ENCODE measurements at regions of chr17 and their contacts with region 1.

Region 1: GRCh38 chr17:58631523-58632323 is 60.1 kb downstream of the TEX14 start:
- H3K4me3 ChIP-seq: peak overlapping the region; percentile 19
- H3K27ac ChIP-seq: peak overlapping the region; percentile 86
- H3K4me1 ChIP-seq: no peaks in the 10 kb centered on the region
- CTCF ChIP-seq: peak; percentile 88

Region 2: GRCh38 chr17:58402047-58402446 is 229.7 kb before region 1 on chr17:
- CTCF ChIA-PET with region 1: no interaction called
- POLR2A ChIA-PET with region 1: no interaction called
- H3K4me3 ChIP-seq: no peak overlapping the region
- H3K27ac ChIP-seq: no peak overlapping the region
- H3K4me1 ChIP-seq: peaks cover 41% of the 10 kb centered on the region
- CTCF ChIP-seq: no peak

Region 3: DNA sequence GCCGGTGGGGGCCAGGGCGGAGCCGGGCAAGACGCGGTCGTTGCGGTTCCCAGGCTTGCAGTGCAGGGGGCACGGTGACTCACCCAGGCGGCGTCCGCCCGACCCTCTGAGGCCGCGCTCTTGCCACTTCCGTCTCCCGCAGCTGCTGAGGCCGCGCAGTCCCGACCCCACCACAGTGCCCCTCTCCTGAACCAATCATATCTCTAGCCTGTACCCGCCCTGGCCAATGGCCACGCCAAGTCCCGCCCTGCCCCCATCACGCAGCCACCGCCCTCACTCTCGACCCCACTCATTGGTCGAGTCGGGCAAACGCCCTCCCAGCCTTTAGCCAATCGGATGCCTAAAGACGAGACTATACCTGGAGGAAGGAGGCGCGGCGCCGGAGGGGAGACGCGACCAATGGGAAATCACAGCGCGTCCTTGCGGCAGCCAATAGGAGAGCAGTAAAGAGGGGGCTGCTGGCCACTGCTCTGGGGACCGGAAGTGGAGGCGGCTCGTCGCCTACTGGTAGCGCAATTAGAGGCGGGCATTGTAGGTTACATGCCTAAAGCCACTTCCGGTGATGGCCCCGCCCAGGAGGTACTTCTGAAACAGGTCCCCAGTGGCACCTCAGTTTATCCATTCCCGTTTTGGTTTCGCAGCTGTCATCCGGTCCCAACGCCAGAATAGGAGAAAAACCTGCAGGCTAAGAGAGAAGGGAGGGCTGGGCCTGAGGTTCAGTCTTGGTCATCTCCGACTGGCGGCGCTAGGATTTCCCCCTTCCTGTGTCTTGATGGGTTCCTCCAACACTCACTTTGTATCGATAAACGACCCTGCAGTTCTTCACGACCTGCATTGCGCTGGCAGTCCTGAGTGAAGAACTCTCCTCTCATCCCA is 113.8 kb before region 1 on chr17:
- CTCF ChIA-PET with region 1: interaction called, 13 read pairs
- POLR2A ChIA-PET with region 1: interaction called, 39 read pairs
- H3K4me3 ChIP-seq: peak overlapping the region; percentile 79
- H3K27ac ChIP-seq: peak overlapping the region; percentile 84
- H3K4me1 ChIP-seq: peaks cover 3% of the 10 kb centered on the region; the same call in 1 of the 2 replicates
- CTCF ChIP-seq: no peak

Region 4: DNA sequence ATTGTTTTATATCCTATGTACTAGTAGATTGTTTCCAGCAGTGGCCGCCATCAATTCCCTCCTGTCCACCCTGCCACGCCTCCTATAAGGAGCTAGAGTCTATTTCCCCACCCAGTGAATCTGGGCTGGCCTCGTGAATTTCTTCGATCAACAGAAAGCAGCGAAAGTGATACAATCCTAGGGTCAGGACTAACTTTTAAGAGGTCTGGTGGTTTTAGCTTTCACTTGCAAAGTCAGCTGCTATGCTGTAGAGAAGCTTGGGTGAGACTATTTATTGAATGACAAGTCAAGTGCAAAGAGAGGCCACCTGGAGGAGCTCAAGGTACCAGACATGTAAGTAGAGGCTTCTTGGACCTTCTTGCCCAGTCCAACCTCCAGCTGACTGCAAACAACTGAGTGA is 36.4 kb before region 1 on chr17:
- CTCF ChIA-PET with region 1: interaction called, 4 read pairs
- POLR2A ChIA-PET with region 1: interaction called, 23 read pairs
- H3K4me3 ChIP-seq: no peak overlapping the region
- H3K27ac ChIP-seq: no peak overlapping the region
- H3K4me1 ChIP-seq: no peaks in the 10 kb centered on the region
- CTCF ChIP-seq: no peak

Region 5: DNA sequence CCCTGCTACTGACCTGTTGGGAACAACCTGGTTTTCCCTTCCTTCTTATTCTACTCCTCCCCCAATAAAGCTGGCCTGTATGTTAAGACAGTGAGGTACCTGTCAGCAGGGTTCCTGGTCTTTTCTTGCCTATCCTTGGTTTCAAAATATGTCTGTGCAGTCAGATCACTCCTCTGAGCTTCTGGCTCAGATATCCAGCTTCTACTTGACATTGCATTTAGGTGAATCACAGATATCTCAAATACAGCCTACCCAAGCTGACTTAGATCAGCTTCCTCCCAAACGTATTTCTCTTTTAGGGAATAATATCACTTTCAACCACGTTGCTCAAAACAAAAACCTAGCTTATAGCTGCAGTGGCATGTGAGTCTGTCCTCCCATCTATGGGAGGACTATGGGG is 11.4 kb after region 1 on chr17:
- CTCF ChIA-PET with region 1: interaction called, 4 read pairs
- POLR2A ChIA-PET with region 1: interaction called, 55 read pairs
- H3K4me3 ChIP-seq: no peak overlapping the region
- H3K27ac ChIP-seq: no peak overlapping the region
- H3K4me1 ChIP-seq: no peaks in the 10 kb centered on the region
- CTCF ChIP-seq: no peak

Region 6: DNA sequence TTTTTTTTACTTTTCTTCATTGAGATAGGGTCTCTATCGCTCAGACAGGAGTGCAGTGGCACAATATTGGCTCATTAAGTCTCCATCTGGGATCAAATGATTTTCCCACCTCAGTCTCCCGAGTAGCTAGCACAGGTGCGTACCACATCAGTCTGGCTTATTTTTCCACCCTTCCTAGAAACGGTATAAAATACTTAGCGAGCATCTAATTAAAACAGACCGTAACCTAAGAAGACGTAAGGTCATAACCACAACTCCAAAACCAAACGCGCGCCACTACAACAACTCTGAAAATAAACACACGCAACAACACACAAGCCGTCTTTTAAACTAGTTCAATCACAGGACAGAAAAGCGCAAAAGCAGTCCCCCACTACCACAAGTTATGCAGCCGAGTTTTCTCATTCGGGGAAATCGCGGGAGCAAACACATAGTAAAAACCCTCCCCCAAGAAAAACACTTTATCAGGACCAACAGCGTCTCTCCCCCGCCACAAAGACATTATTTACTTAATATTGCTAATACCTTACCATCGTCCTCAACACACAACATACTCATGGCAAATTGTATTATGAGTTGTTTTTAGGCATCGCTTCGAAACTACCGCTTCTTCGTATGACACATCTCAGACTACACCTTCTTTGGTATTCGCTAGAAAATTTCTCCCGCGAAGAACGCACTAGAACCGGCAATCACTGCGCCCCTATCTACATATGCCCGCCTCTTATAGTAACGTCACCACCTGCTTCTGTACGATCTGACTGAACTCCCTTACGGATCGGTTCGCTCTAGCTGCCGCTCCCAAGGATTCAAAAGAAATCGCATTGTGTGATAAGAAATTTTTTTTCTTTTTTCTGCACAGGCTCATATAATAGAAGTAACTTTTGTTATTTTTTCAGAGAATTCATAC is 27.3 kb after region 1 on chr17:
- CTCF ChIA-PET with region 1: no interaction called
- POLR2A ChIA-PET with region 1: interaction called, 87 read pairs
- H3K4me3 ChIP-seq: peak overlapping the region; percentile 25
- H3K27ac ChIP-seq: peak overlapping the region; percentile 97
- H3K4me1 ChIP-seq: no peaks in the 10 kb centered on the region
- CTCF ChIP-seq: no peak

Region 7: DNA sequence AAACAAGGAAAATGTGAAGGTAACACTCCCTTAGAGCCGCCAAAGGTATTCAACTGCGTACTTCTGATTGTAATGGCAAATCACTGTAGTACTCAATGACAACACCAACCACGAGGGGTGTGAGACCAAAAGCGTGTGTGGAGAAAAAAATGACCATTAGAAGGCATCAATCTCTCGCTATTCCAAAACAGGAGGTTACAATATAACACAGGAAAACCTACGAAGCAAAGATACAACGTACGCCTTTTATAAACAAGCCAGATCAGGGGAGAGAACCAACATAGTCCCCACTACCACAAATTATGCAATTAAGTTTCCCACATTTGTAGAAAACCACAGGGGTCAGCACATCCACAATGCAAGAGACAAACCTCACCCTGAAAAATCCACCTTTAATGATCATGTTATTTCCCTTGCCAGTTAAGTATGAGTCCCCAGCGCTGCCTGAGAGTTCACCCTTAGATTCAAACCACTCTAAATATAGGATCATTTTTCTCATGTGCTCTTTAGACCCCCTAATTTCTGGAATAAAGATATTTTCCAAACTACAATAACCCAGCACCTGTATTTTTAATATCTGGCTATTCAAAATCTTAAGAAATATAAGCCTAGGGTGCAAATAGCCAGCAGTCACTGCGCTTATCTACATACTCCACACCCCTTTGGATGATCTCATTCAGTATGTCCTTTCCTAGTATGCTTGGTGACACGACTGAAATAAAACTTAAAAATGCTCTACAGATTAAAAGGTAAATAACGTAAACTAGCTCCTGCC is 47.7 kb after region 1 on chr17:
- CTCF ChIA-PET with region 1: interaction called, 3 read pairs
- POLR2A ChIA-PET with region 1: interaction called, 40 read pairs
- H3K4me3 ChIP-seq: no peak overlapping the region
- H3K27ac ChIP-seq: peak overlapping the region; percentile 68
- H3K4me1 ChIP-seq: peaks cover 4% of the 10 kb centered on the region; the same call in 1 of the 2 replicates
- CTCF ChIP-seq: peak; percentile 86

Region 8: DNA sequence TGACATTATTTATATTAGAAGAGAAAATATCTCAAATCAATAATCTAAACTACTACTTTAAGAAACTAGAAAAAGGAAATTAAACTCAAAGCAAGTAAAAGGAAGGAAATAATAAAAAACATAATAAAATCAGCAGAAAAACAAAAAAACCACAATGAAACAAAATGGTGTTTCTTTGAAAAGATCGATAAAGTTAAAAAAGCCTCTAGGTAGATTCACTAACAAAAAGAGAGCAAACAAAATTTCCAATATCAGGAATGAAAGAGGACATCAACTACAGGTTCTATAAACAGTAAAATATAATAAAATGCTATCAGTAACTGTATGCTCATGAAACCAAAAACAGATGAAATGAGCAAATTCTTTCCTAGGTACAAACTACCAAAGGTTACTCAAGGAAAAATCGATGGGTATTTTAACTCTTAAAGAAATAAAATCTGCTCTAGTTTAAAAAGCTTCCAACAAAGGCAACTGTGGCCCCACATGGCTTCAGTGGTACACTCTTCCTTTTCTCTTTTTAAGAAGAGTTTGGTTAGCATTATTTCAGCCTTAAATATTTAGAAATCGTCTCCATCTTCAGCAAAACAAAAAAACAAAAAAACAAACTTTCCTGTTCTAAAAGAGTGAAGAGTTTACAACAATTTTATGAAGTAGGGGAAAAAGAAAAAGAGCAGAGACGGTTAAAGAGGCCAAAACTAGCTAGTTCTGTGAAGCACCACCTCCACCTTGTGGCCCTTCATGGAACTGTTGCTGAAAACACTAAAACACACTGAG is 372.8 kb after region 1 on chr17:
- CTCF ChIA-PET with region 1: no interaction called
- POLR2A ChIA-PET with region 1: interaction called, 11 read pairs
- H3K4me3 ChIP-seq: no peak overlapping the region
- H3K27ac ChIP-seq: no peak overlapping the region
- H3K4me1 ChIP-seq: no peaks in the 10 kb centered on the region
- CTCF ChIP-seq: peak; percentile 83